ENCODE measurements at regions of chr2 and their contacts with region 1.

Region 1: DNA sequence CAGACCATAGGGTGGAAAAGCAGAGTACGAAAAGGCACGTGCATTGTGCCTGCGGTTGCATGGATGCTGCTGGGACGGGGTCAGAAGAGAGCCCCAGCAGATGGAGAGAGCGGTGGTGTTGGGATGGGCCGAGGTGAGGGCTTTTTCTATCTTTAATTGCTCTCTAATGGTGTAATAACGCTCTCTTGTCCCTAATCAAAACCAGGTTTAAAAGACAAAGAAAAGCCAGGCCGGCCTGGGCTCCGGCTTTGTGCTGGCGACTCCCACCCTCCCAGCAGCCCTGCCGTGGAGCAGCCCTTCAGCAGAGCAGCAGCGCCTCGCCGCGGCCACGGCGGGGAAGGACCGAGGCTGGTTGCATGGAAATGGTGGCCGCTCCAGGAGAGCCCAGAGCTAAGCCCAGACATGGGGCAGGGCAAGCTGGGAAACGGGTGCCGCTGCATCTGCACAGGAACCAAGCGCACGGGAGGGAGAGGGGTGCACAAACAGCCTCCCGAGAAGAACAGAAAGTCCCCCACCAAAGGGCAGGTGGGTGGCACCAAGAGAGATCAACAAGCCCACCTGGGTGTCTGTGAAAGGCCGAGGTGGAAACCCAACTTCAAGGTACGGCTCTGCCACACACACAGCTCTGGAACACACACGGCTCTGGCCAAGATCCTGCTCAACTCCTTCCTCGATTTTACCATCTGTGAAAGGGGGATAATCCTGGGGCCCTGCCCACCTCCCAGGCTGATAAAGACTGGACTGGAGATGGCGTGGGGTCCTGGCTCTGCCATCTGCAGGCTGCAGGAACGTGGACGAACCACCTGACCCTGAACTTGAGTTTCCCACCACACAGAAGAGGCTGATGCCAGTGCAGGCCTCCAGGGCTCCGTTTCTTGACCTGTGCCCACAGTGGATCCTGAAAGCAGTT is 15.0 kb downstream of the HS1BP3 start:
- DNase-seq: peak; percentile 88 to 91
- ATAC-seq: peak; percentile 80 to 93 (median 90)
- H3K4me3 ChIP-seq: peak overlapping the region in 1 of 10 donors; percentile 11
- H3K27ac ChIP-seq: peak overlapping the region; percentile 32 to 87 (median 74)
- H3K4me1 ChIP-seq: peaks cover 32 to 72% (median 49%) of the 10 kb centered on the region in 9 donors
- H3K27me3 ChIP-seq: no peaks in the 10 kb centered on the region
- CTCF ChIP-seq: peak; percentile 88 to 98 (median 94)

Region 2: DNA sequence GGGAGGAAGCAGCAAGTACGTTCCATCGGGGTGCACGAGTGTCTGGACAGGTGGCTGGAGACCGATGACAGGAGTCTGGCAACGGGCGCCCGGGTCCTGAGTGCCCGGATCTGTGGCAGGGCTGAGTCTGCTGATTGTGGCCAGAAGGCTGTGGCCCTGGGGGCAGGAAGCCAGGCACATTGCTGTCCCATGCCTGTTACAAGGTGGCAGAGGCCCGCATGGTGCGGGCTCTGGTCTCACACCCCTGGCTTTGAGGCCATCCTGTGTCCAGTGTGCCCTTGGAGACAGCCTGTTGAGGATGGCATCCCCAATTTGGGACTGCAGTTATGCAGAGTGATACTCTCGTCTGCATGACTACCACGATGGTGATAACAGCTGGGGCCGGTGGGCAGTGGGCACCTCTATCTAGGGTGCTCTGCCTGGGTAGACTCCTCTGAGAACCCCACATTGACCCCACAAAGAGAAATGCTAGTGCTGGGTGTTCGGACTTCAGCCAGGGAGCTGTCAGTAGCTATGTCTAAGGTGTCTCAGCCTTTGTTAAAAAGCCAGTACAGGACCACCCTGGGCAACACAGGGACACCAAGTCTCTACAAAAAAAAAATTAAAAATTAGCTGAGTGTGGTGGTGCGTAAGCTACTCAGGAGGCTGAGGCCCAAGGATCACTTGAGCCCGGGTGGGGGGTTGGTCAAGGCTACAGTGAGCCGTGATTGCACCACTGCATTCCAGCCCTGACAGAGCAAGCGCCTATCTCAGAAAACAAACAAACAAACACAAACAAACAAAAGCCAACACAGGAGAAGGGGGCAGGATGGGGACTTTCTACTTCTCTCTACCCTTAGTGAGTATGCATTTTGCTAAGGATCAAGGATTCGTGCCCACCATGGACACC is 100.8 kb before region 1 on chr2:
- intact Hi-C with region 1: no loop called
- DNase-seq: peak in 1 of 2 donors; percentile 53
- ATAC-seq: peak; percentile 19 to 85 (median 56)
- H3K4me3 ChIP-seq: no peak overlapping the region
- H3K27ac ChIP-seq: no peak overlapping the region
- H3K4me1 ChIP-seq: peaks cover 9 to 67% (median 29%) of the 10 kb centered on the region in 9 donors
- H3K27me3 ChIP-seq: no peaks in the 10 kb centered on the region
- CTCF ChIP-seq: no peak

Region 3: DNA sequence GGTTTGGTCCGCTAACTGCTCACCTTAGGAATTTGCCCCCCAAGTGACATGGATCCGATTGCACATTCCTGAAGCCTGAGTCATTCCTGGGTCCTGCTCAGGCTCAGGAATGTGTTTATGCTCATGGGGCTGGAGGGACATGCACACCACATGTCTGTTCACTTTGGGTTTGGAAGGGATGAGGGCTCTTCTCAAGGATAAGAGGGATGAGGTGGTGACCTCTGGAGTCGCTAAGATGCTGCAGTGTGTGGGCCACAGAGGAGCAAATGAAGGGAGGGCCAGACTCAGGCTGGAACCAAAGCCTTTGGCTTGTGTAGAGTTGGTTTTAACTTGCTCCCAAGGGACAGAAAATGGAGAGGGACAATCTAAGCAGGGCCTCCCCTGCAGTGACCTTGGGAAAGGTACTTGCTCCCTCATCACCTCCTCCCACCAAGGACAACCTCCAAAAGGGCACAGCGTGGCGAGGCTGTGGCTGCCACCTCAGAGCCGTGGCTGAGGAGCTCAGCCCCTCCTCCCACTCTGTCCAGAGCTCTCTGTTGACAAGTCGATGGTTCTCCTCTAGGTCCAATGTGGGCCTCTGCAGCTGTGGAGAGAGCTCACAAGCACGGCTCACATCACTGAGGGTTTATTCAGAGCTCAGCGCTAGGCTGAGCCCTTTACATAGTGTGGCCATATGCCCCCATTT is 51.2 kb before region 1 on chr2:
- intact Hi-C with region 1: loop called in 1 of 10 experiments (anchors 5 kb)
- DNase-seq: peak in 1 of 2 donors; percentile 13
- ATAC-seq: peak; percentile 41 to 74 (median 68)
- H3K4me3 ChIP-seq: no peak overlapping the region
- H3K27ac ChIP-seq: peak overlapping the region in 9 of 10 donors; percentile 17 to 69 (median 54)
- H3K4me1 ChIP-seq: peaks cover 17 to 83% (median 54%) of the 10 kb centered on the region in 9 donors
- H3K27me3 ChIP-seq: no peaks in the 10 kb centered on the region
- CTCF ChIP-seq: no peak

Region 4: DNA sequence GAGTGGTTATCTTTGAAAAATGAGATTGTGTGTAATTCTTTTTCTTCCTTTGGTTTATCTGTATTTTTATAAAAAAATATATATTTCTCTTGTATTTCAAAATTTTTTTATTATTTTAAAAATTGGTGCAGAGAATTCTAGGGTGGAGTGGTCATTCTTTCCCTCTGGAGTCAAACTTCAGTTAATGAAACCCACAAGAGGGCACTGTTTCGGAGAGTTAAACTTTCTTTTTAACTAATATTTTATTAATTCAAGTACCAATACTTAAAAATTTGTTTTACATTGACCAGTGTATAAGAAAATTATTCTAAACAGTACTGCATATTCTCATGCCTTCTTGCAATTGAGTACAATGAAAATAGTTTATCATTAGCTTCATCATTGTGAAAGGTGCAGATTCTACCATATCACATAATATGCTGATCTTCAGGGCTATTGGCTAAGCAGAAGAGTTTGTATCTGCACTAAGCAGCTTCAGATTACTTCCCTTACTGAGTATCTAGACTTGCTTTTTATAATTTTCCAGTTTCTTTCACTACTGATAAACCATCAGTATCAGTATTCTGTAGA is 35.1 kb before region 1 on chr2:
- intact Hi-C with region 1: loop called in 5 of 10 experiments (anchors 2 to 5 kb)
- DNase-seq: no peak
- ATAC-seq: no peak
- H3K4me3 ChIP-seq: no peak overlapping the region
- H3K27ac ChIP-seq: peak overlapping the region in 8 of 10 donors; percentile 65 to 88 (median 85)
- H3K4me1 ChIP-seq: peaks cover 29 to 83% (median 72%) of the 10 kb centered on the region in 9 donors
- H3K27me3 ChIP-seq: no peaks in the 10 kb centered on the region
- CTCF ChIP-seq: peak in 8 of 9 donors; percentile 9 to 73 (median 52)

Region 5: GRCh38 chr2:20666304-20667150 is 30.6 kb after region 1 on chr2 and contains the start of gene GDF7:
- intact Hi-C with region 1: no loop called
- DNase-seq: peak; percentile 34 to 49
- ATAC-seq: peak; percentile 34 to 66 (median 45)
- H3K4me3 ChIP-seq: peak within 1 kb of the TSS; percentile 18 to 57 (median 51)
- H3K27ac ChIP-seq: peak within 1 kb of the TSS in 5 of 10 donors; percentile 10 to 46 (median 35)
- H3K4me1 ChIP-seq: peaks cover 0 to 31% (median 20%) of the 10 kb centered on the region in 9 donors
- H3K27me3 ChIP-seq: peaks cover 38 to 98% (median 97%) of the 10 kb centered on the region in 7 donors
- CTCF ChIP-seq: peak in 7 of 9 donors; percentile 28 to 55 (median 44)
- total RNA-seq, gene GDF7: 0.10 to 1.2 (median 0.66) TPM

Measured in heart right ventricle (tissue), 16 donors.